CD4-positive, alpha-beta memory T cell (primary cell): ENCODE measurements at regions of chr20 and their contacts with region 1.

Region 1: DNA sequence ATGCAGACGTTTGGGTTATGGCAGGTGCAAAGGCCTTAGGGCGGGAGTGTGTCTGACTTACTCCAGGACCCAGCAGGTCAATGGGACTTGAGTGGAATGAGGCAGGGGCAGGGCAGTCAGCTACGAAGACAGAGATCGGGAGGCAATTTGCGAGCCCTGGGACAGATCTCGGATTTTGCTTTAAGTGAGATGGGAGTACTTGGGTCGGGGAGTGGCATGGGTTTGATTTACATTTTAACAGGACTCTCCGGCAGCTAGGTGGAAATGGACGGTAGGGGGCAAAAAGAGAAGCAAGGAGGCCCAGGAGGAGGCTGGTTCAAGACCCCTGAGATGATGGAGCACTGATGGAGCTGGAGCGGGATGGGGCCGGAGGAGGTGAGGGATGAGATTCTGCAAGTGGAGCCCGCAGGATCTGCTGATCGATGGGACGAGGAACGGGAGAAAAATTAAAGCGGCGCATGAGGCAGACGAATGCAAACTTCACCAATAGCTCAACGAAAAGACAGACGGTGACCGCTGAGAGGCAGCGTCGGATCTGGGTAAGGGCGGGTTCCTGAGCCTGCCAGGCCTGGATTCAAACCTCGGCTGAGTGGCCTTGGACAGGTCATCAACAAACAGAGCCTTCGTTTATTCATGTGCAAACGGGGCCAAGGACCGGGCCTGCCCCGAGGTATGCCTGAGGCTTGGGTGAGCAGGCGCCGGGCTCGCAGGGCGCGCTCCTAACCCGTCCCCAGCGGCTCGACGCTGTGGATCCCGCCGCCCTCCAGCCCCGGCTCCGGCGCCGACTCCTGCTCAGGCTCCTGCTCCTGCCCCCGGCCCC is 756 bp upstream of the RBCK1 start:
- DNase-seq: peak in 2 of 5 donors; percentile 26 to 75
- H3K4me3 ChIP-seq: peak overlapping the region; percentile 37 to 48
- H3K4me3 Mint-ChIP-seq: peak overlapping the region; percentile 88 to 93 (median 91)
- H3K27ac ChIP-seq: peak overlapping the region; percentile 63
- H3K27ac Mint-ChIP-seq: peak overlapping the region; percentile 91 to 98 (median 97)
- H3K4me1 ChIP-seq: peaks cover 35% of the 10 kb centered on the region
- H3K4me1 Mint-ChIP-seq: peaks cover 32 to 50% (median 44%) of the 10 kb centered on the region in 4 donors
- H3K27me3 ChIP-seq: no peaks in the 10 kb centered on the region
- H3K27me3 Mint-ChIP-seq: no peaks in the 10 kb centered on the region

Region 2: DNA sequence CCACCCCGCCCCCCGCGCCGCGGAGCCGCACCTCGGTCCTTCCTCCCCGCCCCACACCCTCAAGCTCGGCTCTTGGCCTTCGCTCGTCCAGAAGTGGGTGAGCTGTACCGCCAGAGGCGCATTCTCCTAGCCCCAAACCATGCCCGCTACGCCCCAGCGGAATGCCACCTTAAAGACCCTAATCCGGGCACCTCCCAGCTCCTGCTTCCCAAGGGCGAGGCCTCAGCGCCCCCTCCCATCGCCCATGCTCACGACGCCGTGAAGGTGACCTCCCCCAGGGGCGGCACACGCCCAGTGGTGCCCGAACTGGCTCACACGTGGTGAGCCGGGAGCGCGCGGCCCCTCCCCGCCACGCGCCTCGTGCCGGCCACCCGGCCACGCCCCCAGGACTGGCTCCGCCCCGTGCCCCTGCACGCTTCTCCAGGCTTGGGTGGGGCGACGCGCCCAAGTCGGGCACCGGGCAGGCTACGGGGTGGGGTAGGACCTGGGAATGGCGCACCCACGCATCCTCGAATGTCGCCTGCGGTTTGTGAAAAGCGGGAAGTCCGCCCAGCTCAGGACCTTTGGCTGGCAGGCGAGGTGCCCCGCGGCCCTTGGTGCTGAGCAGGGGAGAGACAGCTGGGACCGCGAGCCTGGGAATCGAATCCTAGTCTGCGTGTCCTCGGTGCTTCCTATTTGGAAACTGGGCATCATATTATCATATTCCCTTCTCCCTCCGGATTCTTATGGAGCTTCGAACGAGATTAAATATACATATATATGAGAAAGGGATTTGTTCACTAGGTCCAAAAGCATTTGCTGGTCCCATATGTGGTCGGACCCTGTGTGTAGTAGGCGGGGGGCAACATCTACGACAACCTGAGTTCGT is 82.9 kb before region 1 on chr20:
- CTCF ChIA-PET with region 1: no interaction called
- POLR2A ChIA-PET with region 1: no interaction called
- intact Hi-C with region 1: loop called (anchors 1 kb)
- DNase-seq: peak; percentile 83 to 87 (median 84)
- H3K4me3 ChIP-seq: peak overlapping the region; percentile 79 to 96
- H3K4me3 Mint-ChIP-seq: peak overlapping the region; percentile 90 to 95 (median 92)
- H3K27ac ChIP-seq: peak overlapping the region; percentile 45
- H3K27ac Mint-ChIP-seq: peak overlapping the region; percentile 88 to 96 (median 92)
- H3K4me1 ChIP-seq: peaks cover 25% of the 10 kb centered on the region
- H3K4me1 Mint-ChIP-seq: peaks cover 3 to 22% (median 14%) of the 10 kb centered on the region in 4 donors
- H3K27me3 ChIP-seq: no peaks in the 10 kb centered on the region
- H3K27me3 Mint-ChIP-seq: no peaks in the 10 kb centered on the region

Region 3: DNA sequence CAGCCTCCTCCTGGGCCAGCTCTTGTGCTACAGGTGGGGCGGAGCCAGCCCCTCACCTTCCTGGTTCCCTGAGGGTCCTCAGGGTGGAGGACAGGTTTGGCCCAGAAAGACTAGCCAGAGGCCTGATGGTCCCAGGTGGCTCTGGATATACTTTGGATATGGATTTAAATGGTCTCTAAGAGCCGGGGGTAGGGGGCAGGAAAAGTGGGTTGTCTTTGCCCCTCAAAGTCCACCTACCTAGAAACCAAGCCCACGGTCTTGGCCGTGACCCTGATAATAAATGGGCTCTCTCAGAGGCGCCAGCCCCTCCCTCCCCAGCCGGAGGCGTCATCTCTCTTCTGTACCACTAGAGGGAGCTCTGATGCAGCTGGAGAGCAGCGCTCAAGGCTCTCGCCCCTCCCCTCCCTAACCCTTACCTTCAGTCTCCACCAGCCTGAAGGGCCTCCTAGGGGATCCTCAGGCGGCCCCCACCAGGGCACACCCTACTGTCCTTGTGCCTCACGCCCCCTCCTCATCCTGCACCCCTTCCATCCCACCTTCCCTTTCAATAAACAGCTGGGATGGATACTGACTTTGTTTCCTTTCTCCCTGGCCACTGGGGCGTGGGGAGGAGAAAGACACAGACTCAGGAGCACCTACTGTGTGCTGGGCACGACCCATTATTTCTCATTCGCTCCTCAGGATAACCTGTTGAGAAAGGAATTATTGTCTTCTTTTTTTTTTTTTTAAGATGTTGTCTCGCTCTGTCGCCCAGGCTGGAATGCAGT is 52.9 kb before region 1 on chr20:
- CTCF ChIA-PET with region 1: interaction called, 6 read pairs
- POLR2A ChIA-PET with region 1: interaction called, 3 read pairs
- intact Hi-C with region 1: loop called (anchors 1 kb)
- DNase-seq: peak; percentile 76 to 83 (median 81)
- H3K4me3 ChIP-seq: no peak overlapping the region
- H3K4me3 Mint-ChIP-seq: peak overlapping the region in 1 of 8 donors; percentile 20
- H3K27ac ChIP-seq: no peak overlapping the region
- H3K27ac Mint-ChIP-seq: no peak overlapping the region
- H3K4me1 ChIP-seq: no peaks in the 10 kb centered on the region
- H3K4me1 Mint-ChIP-seq: peaks cover 0 to 7% (median 4%) of the 10 kb centered on the region in 4 donors
- H3K27me3 ChIP-seq: no peaks in the 10 kb centered on the region
- H3K27me3 Mint-ChIP-seq: no peaks in the 10 kb centered on the region

Region 4: GRCh38 chr20:438571-439469 is 31.5 kb after region 1 on chr20:
- CTCF ChIA-PET with region 1: interaction called, 7 read pairs
- POLR2A ChIA-PET with region 1: interaction called, 9 read pairs
- intact Hi-C with region 1: loop called (anchors 2 kb)
- DNase-seq: peak; percentile 66 to 78 (median 75)
- H3K4me3 ChIP-seq: peak overlapping the region; percentile 26
- H3K4me3 Mint-ChIP-seq: peak overlapping the region; percentile 73 to 86 (median 82)
- H3K27ac ChIP-seq: no peak overlapping the region
- H3K27ac Mint-ChIP-seq: peak overlapping the region; percentile 14 to 91 (median 84)
- H3K4me1 ChIP-seq: peaks cover 53% of the 10 kb centered on the region
- H3K4me1 Mint-ChIP-seq: peaks cover 41 to 69% (median 55%) of the 10 kb centered on the region in 4 donors
- H3K27me3 ChIP-seq: no peaks in the 10 kb centered on the region
- H3K27me3 Mint-ChIP-seq: no peaks in the 10 kb centered on the region

Region 5: GRCh38 chr20:478949-479429 is 71.6 kb after region 1 on chr20:
- CTCF ChIA-PET with region 1: interaction called, 7 read pairs
- POLR2A ChIA-PET with region 1: interaction called, 7 read pairs
- intact Hi-C with region 1: loop called (anchors 1 kb)
- DNase-seq: peak; percentile 43 to 72 (median 67)
- H3K4me3 ChIP-seq: no peak overlapping the region
- H3K4me3 Mint-ChIP-seq: no peak overlapping the region
- H3K27ac ChIP-seq: no peak overlapping the region
- H3K27ac Mint-ChIP-seq: peak overlapping the region in 4 of 7 donors; percentile 18 to 48 (median 28)
- H3K4me1 ChIP-seq: peaks cover 21% of the 10 kb centered on the region
- H3K4me1 Mint-ChIP-seq: peaks cover 16 to 28% (median 20%) of the 10 kb centered on the region in 4 donors
- H3K27me3 ChIP-seq: no peaks in the 10 kb centered on the region
- H3K27me3 Mint-ChIP-seq: no peaks in the 10 kb centered on the region

Region 6: GRCh38 chr20:492159-492558 is 84.8 kb after region 1 on chr20:
- CTCF ChIA-PET with region 1: no interaction called
- POLR2A ChIA-PET with region 1: no interaction called
- intact Hi-C with region 1: no loop called
- DNase-seq: no peak
- H3K4me3 ChIP-seq: no peak overlapping the region
- H3K4me3 Mint-ChIP-seq: no peak overlapping the region
- H3K27ac ChIP-seq: no peak overlapping the region
- H3K27ac Mint-ChIP-seq: no peak overlapping the region
- H3K4me1 ChIP-seq: no peaks in the 10 kb centered on the region
- H3K4me1 Mint-ChIP-seq: no peaks in the 10 kb centered on the region
- H3K27me3 ChIP-seq: no peaks in the 10 kb centered on the region
- H3K27me3 Mint-ChIP-seq: no peaks in the 10 kb centered on the region